ENCODE measurements at regions of chr10 and their contacts with region 1.

Region 1: GRCh38 chr10:50577681-50578350 is 45.9 kb downstream of the SGMS1 start:
- DNase-seq: no peak
- ATAC-seq: no peak
- H3K4me3 ChIP-seq: no peak overlapping the region
- H3K4me3 Mint-ChIP-seq: no peak overlapping the region
- H3K27ac ChIP-seq: no peak overlapping the region
- H3K27ac Mint-ChIP-seq: no peak overlapping the region
- H3K4me1 ChIP-seq: no peaks in the 10 kb centered on the region
- H3K4me1 Mint-ChIP-seq: peaks cover 74% of the 10 kb centered on the region
- H3K27me3 ChIP-seq: no peaks in the 10 kb centered on the region
- H3K27me3 Mint-ChIP-seq: no peaks in the 10 kb centered on the region
- CTCF ChIP-seq: no peak

Region 2: GRCh38 chr10:50561816-50562215 is 16.0 kb before region 1 on chr10:
- CTCF ChIA-PET with region 1: interaction called, 5 read pairs
- POLR2A ChIA-PET with region 1: no interaction called
- intact Hi-C with region 1: loop called in 1 of 2 experiments (anchors 2 kb)
- DNase-seq: peak in 3 of 9 experiments; percentile 7 to 49 (median 33)
- ATAC-seq: peak; percentile 55
- H3K4me3 ChIP-seq: no peak overlapping the region
- H3K4me3 Mint-ChIP-seq: no peak overlapping the region
- H3K27ac ChIP-seq: no peak overlapping the region
- H3K27ac Mint-ChIP-seq: no peak overlapping the region
- H3K4me1 ChIP-seq: no peaks in the 10 kb centered on the region
- H3K4me1 Mint-ChIP-seq: peaks cover 21% of the 10 kb centered on the region
- H3K27me3 ChIP-seq: no peaks in the 10 kb centered on the region
- H3K27me3 Mint-ChIP-seq: no peaks in the 10 kb centered on the region
- CTCF ChIP-seq: peak; percentile 51